Sigmoid colon (tissue), 7 donors: ENCODE measurements at regions of chr6 and their contacts with region 1.

Region 1: DNA sequence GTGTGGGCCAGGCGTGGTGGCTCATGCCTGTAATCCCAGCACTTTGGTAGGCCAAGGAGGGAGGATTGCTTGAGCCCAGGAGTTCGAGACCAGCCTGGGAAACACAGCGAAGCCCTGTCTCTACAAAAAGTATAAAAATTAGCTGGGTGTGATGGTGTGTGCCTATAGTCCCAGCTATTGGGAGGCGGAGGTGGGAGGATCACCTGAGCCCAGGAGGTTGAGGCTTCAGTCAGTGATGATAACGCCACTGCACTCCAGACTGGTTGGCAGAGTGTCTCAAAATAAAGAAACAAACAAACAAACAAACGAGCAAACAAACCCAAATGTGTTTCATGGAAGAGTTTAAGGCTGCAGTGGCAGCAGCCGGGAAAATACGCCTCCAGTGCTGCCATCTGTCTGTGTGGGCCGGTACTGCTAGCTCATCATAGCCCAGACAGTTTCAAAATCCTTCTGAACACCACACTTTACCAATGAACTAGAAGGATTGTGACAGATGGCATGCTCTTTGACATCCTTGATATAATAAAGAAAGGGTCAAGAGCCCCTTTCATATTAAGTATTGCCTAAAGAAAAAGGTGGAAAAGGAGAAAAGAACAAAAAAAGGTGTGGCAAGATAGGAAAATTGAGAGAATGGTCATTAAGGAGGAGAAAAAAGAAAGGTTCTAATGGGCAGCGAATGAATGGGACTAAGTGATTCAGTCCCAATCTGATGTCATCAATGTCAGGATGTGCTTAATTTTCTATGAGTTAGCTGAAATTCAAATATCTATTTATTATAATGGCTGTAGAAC is 298.6 kb downstream of the SYNE1 start:
- DNase-seq: peak; percentile 75
- H3K4me3 ChIP-seq: no peak overlapping the region
- H3K27ac ChIP-seq: no peak overlapping the region
- H3K4me1 ChIP-seq: peaks cover 0 to 3% (median 0%) of the 10 kb centered on the region in 4 donors
- H3K27me3 ChIP-seq: no peaks in the 10 kb centered on the region
- CTCF ChIP-seq: peak; percentile 20 to 90 (median 76)
- EP300 ChIP-seq: no peak
- POLR2A ChIP-seq: no peak

Region 2: DNA sequence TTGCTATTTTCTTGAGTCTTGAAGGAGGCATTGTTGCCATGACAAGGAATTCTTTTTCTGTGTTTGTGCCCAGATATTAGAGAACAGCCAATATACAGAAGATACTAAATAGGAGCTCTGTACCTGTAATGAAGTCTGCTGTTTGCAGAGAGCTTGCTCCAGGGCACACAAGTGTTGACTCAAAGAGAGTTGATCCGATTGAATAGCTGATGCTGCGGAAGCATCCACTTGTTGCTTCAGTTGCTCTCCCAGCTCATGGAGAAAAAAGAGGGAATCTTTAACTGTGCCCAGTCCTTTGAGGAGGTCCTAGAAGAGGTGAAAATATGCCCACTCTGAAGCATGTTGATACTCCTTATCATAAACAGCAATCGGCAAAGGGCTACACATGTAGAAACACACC is 119.7 kb before region 1 on chr6:
- intact Hi-C with region 1: loop called (anchors 10 kb)
- DNase-seq: no peak
- H3K4me3 ChIP-seq: no peak overlapping the region
- H3K27ac ChIP-seq: no peak overlapping the region
- H3K4me1 ChIP-seq: no peaks in the 10 kb centered on the region
- H3K27me3 ChIP-seq: no peaks in the 10 kb centered on the region
- CTCF ChIP-seq: no peak
- EP300 ChIP-seq: no peak
- POLR2A ChIP-seq: no peak

Region 3: GRCh38 chr6:152301764-152302568 is 36.6 kb before region 1 on chr6:
- intact Hi-C with region 1: loop called (anchors 5 kb)
- DNase-seq: peak; percentile 92
- H3K4me3 ChIP-seq: peak overlapping the region; percentile 43 to 64 (median 60)
- H3K27ac ChIP-seq: peak overlapping the region; percentile 78 to 84 (median 80)
- H3K4me1 ChIP-seq: peaks cover 0 to 16% (median 4%) of the 10 kb centered on the region in 4 donors
- H3K27me3 ChIP-seq: no peaks in the 10 kb centered on the region
- CTCF ChIP-seq: peak; percentile 49 to 64 (median 56)
- EP300 ChIP-seq: no peak
- POLR2A ChIP-seq: no peak